Right cardiac atrium (tissue), 5 donors: ENCODE measurements at regions of chr13 and their contacts with region 1.

Region 1: GRCh38 chr13:75687150-75687763 is 51.1 kb downstream of the LMO7 start:
- DNase-seq: no peak
- ATAC-seq: peak in 1 of 2 donors; percentile 31
- H3K4me3 ChIP-seq: no peak overlapping the region
- H3K27ac ChIP-seq: no peak overlapping the region
- H3K4me1 ChIP-seq: no peaks in the 10 kb centered on the region
- H3K27me3 ChIP-seq: no peaks in the 10 kb centered on the region

Region 2: GRCh38 chr13:75115171-75115570 is 572.1 kb before region 1 on chr13:
- intact Hi-C with region 1: no loop called
- DNase-seq: no peak
- ATAC-seq: no peak
- H3K4me3 ChIP-seq: no peak overlapping the region
- H3K27ac ChIP-seq: no peak overlapping the region
- H3K4me1 ChIP-seq: no peaks in the 10 kb centered on the region
- H3K27me3 ChIP-seq: no peaks in the 10 kb centered on the region

Region 3: GRCh38 chr13:75607451-75607850 is 79.8 kb before region 1 on chr13:
- intact Hi-C with region 1: no loop called
- DNase-seq: no peak
- ATAC-seq: no peak
- H3K4me3 ChIP-seq: no peak overlapping the region
- H3K27ac ChIP-seq: no peak overlapping the region
- H3K4me1 ChIP-seq: no peaks in the 10 kb centered on the region
- H3K27me3 ChIP-seq: no peaks in the 10 kb centered on the region

Region 4: DNA sequence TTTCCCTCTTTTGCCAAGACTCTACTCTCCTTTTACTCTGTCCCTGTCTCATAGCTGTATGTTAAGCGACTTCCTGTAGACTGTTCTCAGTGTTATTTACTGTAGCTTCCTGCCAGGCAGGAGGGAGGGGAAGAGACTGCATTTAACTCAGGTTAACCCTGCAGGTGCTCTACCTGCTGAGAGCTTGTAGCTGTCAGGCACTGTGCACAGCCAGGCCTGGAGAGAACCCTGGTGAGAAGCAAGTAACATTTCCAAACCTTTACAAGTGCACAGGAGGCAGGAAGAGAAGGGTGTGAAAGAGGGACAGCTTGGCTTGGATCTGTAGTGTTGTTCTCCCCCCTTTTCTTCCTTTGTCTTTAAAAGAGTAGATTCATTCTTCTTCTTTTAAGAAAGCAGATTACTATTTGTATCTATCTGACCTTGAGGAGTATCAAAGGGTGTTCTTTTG is 115.9 kb after region 1 on chr13:
- intact Hi-C with region 1: loop called in 1 of 4 experiments (anchors 10 kb)
- DNase-seq: no peak
- ATAC-seq: peak in 1 of 2 donors; percentile 44
- H3K4me3 ChIP-seq: no peak overlapping the region
- H3K27ac ChIP-seq: peak overlapping the region; percentile 90
- H3K4me1 ChIP-seq: peaks cover 2% of the 10 kb centered on the region
- H3K27me3 ChIP-seq: no peaks in the 10 kb centered on the region

Region 5: GRCh38 chr13:75812751-75813181 is 125.5 kb after region 1 on chr13:
- intact Hi-C with region 1: loop called in 2 of 4 experiments (anchors 10 kb)
- DNase-seq: peak in 1 of 3 donors; percentile 32
- ATAC-seq: peak; percentile 75 to 77
- H3K4me3 ChIP-seq: no peak overlapping the region
- H3K27ac ChIP-seq: peak overlapping the region; percentile 43
- H3K4me1 ChIP-seq: peaks cover 5% of the 10 kb centered on the region
- H3K27me3 ChIP-seq: no peaks in the 10 kb centered on the region

Region 6: DNA sequence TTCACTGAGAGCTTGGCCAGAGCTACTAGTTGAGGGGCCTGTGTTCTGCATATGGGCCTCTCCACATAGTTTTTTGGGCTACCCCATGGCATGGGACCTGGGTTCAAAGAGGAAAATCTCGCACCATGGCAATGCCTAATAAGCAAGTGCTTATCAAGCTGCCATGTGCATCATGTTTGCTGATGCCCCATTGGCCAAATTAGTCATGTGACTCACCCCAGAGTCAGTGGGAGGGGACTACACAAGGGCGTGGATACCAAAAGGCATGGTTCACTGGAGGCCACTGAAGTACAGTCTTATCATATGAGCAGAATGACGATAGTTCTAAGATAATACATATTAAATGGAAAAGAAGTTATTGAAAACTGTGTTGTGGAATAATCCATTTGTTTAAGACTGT is 163.7 kb after region 1 on chr13:
- intact Hi-C with region 1: loop called in 1 of 4 experiments (anchors 10 kb)
- DNase-seq: no peak
- ATAC-seq: no peak
- H3K4me3 ChIP-seq: no peak overlapping the region
- H3K27ac ChIP-seq: no peak overlapping the region
- H3K4me1 ChIP-seq: no peaks in the 10 kb centered on the region
- H3K27me3 ChIP-seq: no peaks in the 10 kb centered on the region

Region 7: GRCh38 chr13:75864718-75865117 is 177.5 kb after region 1 on chr13:
- intact Hi-C with region 1: loop called in 3 of 4 experiments (anchors 10 kb)
- DNase-seq: no peak
- ATAC-seq: no peak
- H3K4me3 ChIP-seq: no peak overlapping the region
- H3K27ac ChIP-seq: no peak overlapping the region
- H3K4me1 ChIP-seq: no peaks in the 10 kb centered on the region
- H3K27me3 ChIP-seq: no peaks in the 10 kb centered on the region

Region 8: DNA sequence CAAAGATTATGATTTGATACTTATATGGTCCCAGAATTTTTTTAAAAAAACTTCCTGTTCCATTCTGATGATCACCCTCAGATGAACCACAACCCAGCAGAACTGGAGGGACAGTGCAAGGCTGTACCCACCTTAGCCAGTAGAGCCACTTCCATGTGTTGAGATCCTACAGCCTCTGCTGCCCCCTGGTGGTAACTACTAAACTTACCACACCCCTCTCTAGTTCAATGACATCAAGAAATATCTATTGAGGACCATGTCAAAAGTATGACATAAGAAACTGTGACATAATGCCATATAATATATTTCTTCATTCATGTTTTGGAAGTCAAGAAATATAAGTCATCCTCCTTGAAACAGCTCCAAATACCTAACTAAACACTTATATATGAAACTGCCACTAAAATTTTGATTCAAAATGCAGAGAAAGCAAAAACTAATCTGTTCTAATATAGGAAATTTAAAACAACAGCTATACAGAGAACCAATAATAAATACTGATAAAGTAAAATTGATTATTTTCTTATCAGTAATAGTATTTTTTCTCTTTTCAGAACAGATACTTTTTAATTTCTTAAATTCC is 786.4 kb after region 1 on chr13:
- intact Hi-C with region 1: loop called in 2 of 4 experiments (anchors 10 kb)
- DNase-seq: peak; percentile 58 to 68 (median 64)
- ATAC-seq: peak; percentile 94 to 97
- H3K4me3 ChIP-seq: no peak overlapping the region
- H3K27ac ChIP-seq: no peak overlapping the region
- H3K4me1 ChIP-seq: no peaks in the 10 kb centered on the region
- H3K27me3 ChIP-seq: no peaks in the 10 kb centered on the region

Region 9: DNA sequence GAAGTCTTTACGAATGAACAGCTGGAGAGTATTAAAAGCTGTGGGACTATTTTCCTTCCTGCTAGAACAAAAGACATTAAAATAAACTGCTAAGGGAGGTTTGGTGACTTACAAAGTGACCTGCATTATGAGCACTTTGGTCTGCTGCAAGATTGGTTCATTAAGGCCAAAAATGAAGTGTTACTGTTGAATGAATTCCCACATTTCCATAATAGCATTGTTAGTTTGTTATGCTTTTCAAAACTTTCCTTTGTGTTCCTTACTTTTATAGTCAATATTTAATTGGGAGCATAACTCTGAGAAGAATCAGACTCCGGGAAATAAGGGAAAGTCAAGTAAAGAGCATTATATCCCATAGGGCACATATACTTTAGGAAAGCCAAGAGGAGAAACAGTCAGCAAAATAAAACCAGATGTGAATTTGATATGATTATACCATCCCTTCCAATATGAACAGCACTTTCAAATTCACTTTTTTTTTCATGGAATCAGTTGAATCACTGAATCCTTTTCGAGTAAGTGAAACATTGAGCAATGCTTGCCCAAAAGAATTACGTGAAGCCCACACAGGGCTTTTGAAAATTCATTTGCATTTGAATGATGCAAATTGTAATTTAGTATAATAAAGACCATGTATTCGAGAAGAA is 1086.3 kb after region 1 on chr13:
- intact Hi-C with region 1: no loop called
- DNase-seq: no peak
- ATAC-seq: no peak
- H3K4me3 ChIP-seq: no peak overlapping the region
- H3K27ac ChIP-seq: no peak overlapping the region
- H3K4me1 ChIP-seq: no peaks in the 10 kb centered on the region
- H3K27me3 ChIP-seq: no peaks in the 10 kb centered on the region

Region 10: DNA sequence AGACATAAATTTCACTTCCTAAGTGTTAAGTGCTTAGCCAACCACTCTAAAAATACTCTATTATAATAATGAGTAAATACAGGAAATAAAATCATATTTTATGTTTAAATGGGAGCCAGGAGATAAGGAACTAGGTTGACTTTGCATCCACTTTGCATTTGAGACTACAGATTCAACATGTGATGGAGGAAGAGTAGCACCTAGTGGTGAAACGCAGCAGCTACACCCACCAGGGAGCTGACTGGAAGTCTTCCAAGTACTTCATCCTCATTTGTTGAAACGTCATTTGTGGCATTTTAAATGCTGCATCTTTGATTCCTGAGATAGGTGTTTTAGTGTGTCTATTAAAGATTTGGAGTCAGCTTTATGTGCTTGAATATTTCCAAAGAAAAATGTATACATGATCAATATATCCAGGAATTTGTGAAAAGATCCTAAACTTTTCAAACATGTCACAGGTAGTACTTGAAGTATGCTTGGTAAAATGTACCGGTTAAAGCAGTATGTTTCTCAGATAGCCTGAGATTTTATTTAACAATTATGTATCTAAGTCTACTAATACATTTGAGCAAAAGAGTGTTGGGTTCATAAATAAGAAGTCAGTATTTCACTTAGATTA is 1216.4 kb after region 1 on chr13:
- intact Hi-C with region 1: loop called in 1 of 4 experiments (anchors 10 kb)
- DNase-seq: peak; percentile 33 to 74 (median 56)
- ATAC-seq: peak; percentile 83 to 84
- H3K4me3 ChIP-seq: no peak overlapping the region
- H3K27ac ChIP-seq: no peak overlapping the region
- H3K4me1 ChIP-seq: no peaks in the 10 kb centered on the region
- H3K27me3 ChIP-seq: no peaks in the 10 kb centered on the region